Activated T-helper 2 cell treated with anti-CD3 and anti-CD28 coated beads, Interferon-gamma antibody, Interleukin-2, Interleukin-4, amounts not matched to agents 10 μg/mL and 5 μg/mL and 100 μg/mL, durations not matched to agents 14 hours and 24 hours and 36 hours (primary cell): ENCODE measurements at regions of chr16 and their contacts with region 1.

Region 1: DNA sequence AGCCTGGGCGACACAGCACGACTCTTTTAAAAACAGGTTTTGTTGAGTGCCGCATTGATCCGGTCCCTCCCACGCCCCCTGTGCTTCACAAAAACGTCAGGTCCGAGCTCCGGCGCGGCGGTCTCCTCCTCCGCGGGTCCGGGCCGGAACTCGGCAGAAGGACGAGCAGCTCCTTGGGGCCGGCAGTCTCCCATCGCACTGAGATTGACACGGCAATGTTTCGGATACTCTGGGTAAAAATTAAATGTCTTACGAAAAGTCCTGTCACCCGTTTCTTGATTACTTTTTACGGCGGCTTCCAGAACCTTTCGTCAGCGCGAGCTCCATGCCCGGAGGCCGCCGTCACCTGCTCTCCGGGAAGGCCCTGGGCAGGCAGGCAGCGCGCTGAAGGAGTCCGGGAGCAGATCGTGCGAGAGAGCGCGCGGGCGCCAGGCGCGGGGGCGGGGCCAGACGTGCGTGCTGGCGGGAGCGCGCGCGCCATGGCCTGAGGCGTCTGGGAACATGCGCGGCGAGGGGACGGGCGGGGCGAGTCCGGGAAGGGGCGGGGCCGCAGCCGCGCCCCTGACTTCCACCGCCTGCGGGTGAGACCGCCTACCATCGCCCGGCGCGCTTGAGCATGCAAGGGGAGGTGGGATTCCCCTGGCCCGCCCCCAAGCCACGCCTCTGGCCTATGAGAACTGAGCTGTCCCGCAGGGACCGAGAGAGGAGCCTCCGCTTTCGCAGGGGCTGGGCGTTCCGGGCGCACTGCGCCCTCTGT is 11.7 kb upstream of the SRL start:
- DNase-seq: peak; percentile 99
- H3K4me3 Mint-ChIP-seq: peak overlapping the region; percentile 88
- H3K27ac Mint-ChIP-seq: peak overlapping the region; percentile 95
- H3K4me1 Mint-ChIP-seq: peaks cover 3% of the 10 kb centered on the region
- H3K27me3 Mint-ChIP-seq: no peaks in the 10 kb centered on the region

Region 2: DNA sequence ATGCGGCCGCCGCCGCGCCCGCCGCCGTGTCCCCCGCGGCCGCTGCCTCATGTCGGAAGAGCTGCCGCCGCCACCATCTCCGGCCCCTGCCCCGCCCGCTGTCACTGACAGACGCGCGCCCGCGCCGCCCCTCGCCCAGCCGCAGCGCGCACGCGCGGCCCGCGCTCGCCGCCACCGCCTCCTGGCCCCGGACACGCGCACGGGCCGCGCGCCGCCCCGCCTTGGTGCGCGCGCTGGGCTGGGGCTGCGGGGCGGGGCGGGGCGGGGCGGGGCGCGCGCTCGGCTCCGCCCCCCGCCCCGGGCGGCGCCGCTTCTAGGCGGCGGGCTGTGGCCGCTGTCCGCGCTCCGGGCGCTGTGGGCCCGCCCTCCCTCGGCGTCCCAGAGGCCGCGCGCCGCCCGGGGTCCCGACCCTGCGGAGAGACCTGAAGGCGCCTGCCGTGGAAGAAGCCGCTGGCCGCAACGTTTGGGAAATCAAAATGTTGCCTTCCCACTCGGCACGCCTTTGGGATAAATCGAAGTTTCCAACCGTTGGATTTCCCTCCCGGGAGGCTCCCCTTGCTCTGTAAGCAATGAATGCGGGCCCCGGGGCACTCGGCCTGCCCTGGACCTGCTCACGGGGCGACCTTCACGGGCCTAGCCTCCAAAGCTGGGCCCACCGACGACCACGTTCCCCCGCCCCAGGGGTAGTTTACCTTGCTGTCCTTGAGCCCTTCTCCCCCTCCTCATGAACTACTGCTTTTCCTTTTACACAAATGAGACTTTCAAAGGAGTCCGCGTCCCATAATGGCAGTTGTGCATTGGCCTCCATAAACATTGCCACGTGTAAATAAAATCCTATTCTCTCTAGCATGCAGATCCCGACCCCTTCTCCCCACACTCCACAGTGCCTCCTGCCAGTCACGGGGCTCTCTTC is 137.0 kb before region 1 on chr16 and contains the start of gene ADCY9:
- intact Hi-C with region 1: loop called (anchors 1 kb)
- DNase-seq: peak; percentile 78
- H3K4me3 Mint-ChIP-seq: peak within 1 kb of the TSS; percentile 80
- H3K27ac Mint-ChIP-seq: no peak within 1 kb of the TSS
- H3K4me1 Mint-ChIP-seq: peaks cover 32% of the 10 kb centered on the region
- H3K27me3 Mint-ChIP-seq: peaks cover 10% of the 10 kb centered on the region
- total RNA-seq, gene ADCY9: 6.0 and 7.7 TPM in 2 replicates

Region 3: DNA sequence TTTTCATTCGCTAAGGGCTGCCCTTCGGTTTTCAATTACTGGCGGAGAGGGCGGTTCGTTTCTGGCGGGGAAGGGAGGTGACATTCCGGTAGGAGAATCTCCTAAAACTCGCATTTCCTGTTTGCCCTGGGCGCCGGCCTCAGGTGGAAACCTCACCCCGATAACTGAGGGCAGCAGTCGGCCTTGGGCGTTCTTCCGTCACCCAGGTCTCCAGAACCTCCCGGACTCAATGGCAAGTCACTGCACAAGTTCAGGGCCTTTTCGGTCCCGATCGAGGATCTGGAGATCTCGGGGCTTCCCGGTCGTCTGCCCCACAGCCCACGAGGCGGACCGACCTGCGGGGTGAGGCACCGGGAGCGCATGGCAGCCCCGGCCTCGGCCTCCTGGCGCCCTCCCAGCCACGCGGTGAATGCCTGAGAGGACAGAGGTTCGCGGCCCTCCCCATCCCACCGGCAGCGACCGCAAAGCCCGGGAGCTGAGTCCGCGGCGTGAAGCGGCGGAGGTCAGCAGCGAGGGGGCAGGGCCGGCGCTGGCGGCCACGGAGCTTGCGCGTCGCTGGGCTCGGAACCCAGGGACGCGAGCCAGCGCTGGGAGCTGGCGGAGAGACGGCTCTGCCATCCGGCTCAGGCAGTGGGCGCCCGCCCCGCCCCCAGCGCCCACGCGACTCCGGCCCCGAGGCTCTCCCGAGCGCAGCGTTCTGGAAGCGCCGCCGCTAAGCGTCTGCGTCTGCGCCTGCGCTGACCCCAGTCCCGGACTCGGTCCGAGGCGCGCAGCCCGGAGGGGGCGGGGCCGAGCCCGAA is 70.1 kb before region 1 on chr16:
- intact Hi-C with region 1: loop called (anchors 5 kb)
- DNase-seq: peak; percentile 87
- H3K4me3 Mint-ChIP-seq: peak overlapping the region; percentile 74
- H3K27ac Mint-ChIP-seq: peak overlapping the region; percentile 58
- H3K4me1 Mint-ChIP-seq: peaks cover 4% of the 10 kb centered on the region
- H3K27me3 Mint-ChIP-seq: peaks cover 10% of the 10 kb centered on the region

Region 4: DNA sequence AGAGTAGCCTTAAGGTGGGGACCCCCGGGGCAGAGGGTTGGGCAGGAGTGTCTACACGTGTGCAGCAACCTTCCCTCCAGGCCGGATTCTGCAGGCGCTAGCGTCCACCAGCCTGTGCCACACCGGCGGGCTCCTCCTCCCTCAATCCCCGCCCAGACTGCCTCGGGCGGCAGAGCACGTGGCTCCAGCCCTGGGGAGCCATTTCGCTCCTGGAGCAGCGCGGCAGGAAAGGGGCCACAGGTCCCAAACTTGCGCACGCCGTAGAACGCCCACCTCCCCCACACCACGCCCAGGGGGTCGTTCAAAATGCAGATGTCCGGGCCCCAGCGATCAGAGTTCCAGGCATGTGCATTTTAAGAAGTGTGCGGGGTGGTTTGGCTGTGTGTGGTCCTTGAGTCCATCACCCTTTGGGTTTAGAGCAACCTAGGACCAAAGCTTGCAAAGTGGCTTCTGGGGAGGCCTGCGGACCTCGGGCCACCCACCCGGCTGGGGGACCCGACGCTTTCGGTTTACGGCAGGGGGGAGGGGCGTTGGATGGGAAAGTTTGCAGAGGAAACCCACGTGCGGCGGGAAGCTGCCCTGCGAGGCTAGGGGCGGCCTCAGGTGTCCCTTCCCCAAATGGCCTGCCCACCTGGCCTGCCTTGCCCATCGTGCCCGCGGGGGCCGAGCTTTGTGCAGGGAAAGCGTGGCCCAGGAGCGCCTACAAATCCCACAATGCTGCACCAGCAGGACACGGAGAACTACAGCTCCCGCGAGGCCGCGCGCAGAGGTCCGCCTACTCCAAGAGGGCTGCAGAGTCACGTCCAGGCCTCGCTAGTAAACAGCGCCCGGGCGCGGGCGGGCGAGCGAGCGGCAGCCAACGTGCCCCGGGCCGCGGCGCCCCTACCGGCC is 17.8 kb after region 1 on chr16:
- intact Hi-C with region 1: loop called (anchors 1 kb)
- DNase-seq: peak; percentile 87
- H3K4me3 Mint-ChIP-seq: peak overlapping the region; percentile 83
- H3K27ac Mint-ChIP-seq: peak overlapping the region; percentile 90
- H3K4me1 Mint-ChIP-seq: peaks cover 6% of the 10 kb centered on the region
- H3K27me3 Mint-ChIP-seq: no peaks in the 10 kb centered on the region

Region 5: GRCh38 chr16:4307215-4308037 is 53.9 kb after region 1 on chr16:
- intact Hi-C with region 1: loop called (anchors 1 kb)
- DNase-seq: peak; percentile 96
- H3K4me3 Mint-ChIP-seq: peak overlapping the region; percentile 99
- H3K27ac Mint-ChIP-seq: peak overlapping the region; percentile 97
- H3K4me1 Mint-ChIP-seq: peaks cover 18% of the 10 kb centered on the region
- H3K27me3 Mint-ChIP-seq: no peaks in the 10 kb centered on the region